ENCODE measurements at regions of chr16 and their contacts with region 1.

Region 1: DNA sequence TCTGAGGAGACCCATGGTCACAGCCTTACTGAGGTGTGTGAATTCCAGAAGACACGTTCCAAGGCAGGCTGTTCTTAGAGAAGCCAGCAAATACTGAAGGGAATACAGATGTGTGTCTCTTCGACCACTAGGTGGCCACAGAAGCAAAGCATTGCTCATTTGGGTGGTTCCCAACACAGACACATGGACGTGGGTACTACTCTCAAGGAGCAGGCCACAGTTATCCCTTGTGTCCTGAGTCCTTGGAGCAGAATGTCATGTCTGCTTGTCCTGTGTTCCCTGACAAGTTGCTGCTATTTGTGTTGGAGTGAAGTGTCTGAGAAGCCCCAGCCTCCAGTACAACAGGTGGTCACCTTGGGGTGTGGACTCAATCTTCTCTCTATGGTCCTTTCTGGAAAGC is 30.3 kb downstream of the HMOX2 start:
- DNase-seq: peak; percentile 79
- H3K4me3 Mint-ChIP-seq: peak overlapping the region; percentile 48
- H3K27ac Mint-ChIP-seq: peak overlapping the region; percentile 91
- H3K4me1 Mint-ChIP-seq: peaks cover 46% of the 10 kb centered on the region
- H3K27me3 Mint-ChIP-seq: no peaks in the 10 kb centered on the region

Region 2: DNA sequence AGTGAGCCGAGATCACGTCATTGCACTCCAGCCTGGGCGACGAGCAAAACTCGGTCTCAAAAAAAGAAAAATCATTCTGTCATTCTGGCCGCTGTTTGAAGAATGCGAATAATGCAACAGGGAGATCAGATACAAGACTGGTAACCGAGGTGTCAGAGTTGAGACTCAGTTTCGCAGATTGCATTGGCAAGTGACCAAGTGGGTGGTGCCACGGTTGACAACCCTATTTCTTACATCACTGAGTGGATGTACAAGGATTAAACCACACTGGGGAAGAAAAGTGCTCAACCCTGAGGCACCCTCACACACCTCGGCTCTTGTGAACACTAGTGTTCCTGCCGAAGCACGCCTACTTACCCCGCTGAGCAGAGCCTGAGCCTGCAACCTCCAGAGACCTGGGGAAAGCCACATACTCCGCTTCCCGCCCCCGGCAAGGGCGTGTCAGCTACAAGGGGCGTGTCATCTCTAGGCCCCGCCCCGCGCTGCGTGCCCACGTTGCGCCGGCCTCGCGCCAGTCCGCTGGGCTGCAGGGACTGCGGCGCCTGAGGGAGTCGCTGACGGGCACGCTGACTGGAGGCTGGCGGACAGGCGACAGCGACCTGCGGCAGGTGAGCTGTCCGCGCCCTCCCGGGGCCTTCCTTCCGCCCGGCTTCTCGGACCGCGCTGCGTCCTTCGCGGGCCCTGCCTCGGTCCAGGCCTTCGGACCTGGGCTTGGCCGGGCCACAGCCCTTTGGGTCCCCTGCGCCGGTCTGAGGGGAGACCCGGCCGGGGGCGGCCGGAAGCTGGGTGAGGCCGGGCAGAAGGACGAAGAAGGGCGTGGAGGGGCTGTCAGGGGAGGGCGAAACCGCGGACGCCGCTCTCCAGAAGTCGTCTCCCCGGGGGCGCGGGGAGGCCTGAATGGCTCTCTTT is 30.3 kb before region 1 on chr16 and contains the start of gene HMOX2:
- CTCF ChIA-PET with region 1: interaction called, 32 read pairs
- intact Hi-C with region 1: loop called (anchors 1 kb)
- DNase-seq: peak; percentile 95
- H3K4me3 Mint-ChIP-seq: peak within 1 kb of the TSS; percentile 89
- H3K27ac Mint-ChIP-seq: peak within 1 kb of the TSS; percentile 82
- H3K4me1 Mint-ChIP-seq: peaks cover 42% of the 10 kb centered on the region
- H3K27me3 Mint-ChIP-seq: no peaks in the 10 kb centered on the region
- total RNA-seq, gene HMOX2: 46.8 to 49.3 TPM

Region 3: DNA sequence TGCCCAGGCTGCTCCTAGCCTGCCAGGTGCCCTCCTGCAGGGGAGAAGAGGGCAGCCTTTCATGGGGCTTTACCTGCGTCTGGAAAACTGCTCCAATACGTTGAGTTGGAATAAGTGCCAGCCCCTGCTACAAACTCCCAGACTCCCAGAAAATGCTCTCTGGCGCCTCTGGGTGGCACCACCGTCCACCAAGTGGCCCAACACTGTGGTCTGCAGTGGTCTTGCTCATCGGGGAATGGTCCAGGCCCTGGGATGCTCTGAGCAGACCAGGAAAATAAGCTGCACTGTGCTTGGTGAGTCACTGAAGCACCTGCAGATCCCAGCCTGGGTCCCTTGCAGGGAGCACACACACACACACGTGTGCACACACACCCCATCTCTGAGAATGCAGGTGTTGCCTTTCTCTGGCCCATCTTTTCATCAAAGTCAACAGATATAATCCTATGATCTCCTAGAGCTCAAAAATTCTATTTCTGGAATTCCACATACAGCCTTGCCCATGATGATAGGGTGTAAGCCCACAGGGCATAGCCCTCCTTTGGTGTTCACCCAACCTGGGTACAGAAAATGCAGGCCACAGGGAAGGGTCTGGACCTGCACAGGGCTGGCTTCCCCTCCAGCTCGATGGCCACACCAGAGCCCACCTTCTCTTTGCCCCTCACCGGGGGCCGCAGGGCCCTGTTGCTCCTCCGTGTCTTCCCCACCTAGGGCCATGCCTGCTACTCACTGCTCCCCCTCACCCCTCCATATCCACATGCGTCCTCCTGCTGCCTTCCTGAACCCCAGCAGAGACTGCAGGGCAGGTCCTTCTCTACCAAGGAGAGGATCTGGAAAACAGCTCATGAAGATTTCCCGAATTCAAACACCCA is 11.6 kb after region 1 on chr16:
- CTCF ChIA-PET with region 1: interaction called, 28 read pairs
- intact Hi-C with region 1: no loop called
- DNase-seq: no peak
- H3K4me3 Mint-ChIP-seq: no peak overlapping the region
- H3K27ac Mint-ChIP-seq: no peak overlapping the region
- H3K4me1 Mint-ChIP-seq: peaks cover 30% of the 10 kb centered on the region
- H3K27me3 Mint-ChIP-seq: no peaks in the 10 kb centered on the region

Region 4: DNA sequence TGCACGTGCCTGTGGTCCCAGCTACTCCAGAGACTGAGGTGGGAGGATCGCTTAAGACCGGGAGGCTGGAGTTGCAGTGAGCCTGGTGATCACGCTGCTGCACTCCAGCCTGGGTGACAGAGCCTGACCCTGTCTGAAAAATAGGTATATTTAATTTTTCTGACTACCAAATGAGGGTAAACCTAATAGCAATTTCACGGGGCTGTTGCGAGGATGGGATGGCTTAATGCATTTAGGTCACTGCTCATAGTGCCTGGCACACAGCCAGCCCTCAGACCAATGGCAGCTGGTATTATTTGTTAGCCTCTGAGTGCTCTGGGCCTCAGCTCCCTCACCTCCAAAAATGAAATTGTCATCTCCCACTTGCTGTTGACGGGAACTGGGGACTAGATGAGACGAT is 38.0 kb after region 1 on chr16:
- CTCF ChIA-PET with region 1: interaction called, 81 read pairs
- intact Hi-C with region 1: loop called (anchors 1 kb)
- DNase-seq: no peak
- H3K4me3 Mint-ChIP-seq: no peak overlapping the region
- H3K27ac Mint-ChIP-seq: no peak overlapping the region
- H3K4me1 Mint-ChIP-seq: peaks cover 4% of the 10 kb centered on the region
- H3K27me3 Mint-ChIP-seq: no peaks in the 10 kb centered on the region

Region 5: DNA sequence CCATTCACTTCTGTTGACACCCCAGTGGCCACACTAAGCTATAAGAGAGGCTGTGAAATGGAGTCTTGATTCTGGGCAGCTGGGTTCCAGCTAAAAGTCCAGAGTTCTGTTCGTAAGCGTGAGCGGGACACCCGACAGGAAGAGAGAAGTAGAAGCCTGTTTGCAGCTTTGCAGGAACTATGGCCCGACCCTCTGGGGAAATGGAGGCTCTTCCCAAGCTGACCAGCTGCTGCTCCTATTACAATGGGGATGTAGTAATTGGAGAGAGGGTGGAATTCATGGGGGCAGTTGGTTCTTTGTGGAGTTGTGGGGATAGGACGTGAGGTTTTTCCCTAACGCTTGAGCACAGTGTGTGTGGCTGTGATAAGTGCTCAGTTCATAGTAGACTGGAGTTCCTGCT is 79.8 kb after region 1 on chr16:
- CTCF ChIA-PET with region 1: interaction called, 93 read pairs
- intact Hi-C with region 1: loop called (anchors 1 kb)
- DNase-seq: no peak
- H3K4me3 Mint-ChIP-seq: no peak overlapping the region
- H3K27ac Mint-ChIP-seq: no peak overlapping the region
- H3K4me1 Mint-ChIP-seq: peaks cover 4% of the 10 kb centered on the region
- H3K27me3 Mint-ChIP-seq: peaks cover 3% of the 10 kb centered on the region

Region 6: GRCh38 chr16:4679850-4680636 is 173.6 kb after region 1 on chr16:
- CTCF ChIA-PET with region 1: no interaction called
- intact Hi-C with region 1: loop called (anchors 5 kb)
- DNase-seq: no peak
- H3K4me3 Mint-ChIP-seq: no peak overlapping the region
- H3K27ac Mint-ChIP-seq: no peak overlapping the region
- H3K4me1 Mint-ChIP-seq: peaks cover 26% of the 10 kb centered on the region
- H3K27me3 Mint-ChIP-seq: no peaks in the 10 kb centered on the region